ENCODE measurements at regions of chrX and their contacts with region 1.

Region 1: DNA sequence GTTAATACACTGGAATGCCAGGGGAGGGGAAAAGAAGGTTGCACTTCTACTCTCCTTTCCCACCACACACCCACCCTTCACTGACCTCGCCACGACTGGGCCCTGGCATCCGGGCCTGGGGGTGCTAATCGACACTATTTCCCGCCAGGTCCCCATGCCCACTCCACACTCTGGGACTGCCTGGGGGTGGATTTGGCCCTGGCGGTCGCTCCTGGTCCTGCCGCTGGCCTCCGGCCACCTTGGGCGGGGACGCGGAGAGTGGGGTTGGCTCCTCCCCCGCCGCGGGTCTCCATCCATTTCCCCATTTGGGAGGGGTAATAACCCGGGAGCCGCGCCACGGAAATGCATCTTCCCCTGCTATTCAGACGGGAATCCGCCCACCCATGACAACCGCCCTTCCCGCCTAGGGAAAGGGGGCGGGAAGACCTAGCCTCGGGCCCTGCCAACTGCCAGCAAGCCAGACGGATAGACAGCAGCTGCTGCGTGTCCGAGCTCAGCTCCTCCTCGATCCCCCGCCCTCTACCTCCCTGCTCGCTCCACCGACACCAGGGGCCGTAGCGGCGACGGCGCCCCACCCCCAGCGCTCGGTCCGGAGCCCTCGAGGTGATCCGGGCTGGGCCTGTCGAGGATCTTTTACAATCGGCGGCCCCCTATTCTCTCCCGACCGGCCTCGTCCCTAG is 78.1 kb downstream of the RLIM start:
- DNase-seq: peak; percentile 72
- H3K4me3 ChIP-seq: peak overlapping the region; percentile 32 to 46 (median 35)
- H3K27ac ChIP-seq: peak overlapping the region; percentile 68
- H3K4me1 ChIP-seq: peaks cover 9% of the 10 kb centered on the region
- H3K27me3 ChIP-seq: no peaks in the 10 kb centered on the region
- CTCF ChIP-seq: peak; percentile 23 to 50
- POLR2A ChIP-seq: no peak

Region 2: DNA sequence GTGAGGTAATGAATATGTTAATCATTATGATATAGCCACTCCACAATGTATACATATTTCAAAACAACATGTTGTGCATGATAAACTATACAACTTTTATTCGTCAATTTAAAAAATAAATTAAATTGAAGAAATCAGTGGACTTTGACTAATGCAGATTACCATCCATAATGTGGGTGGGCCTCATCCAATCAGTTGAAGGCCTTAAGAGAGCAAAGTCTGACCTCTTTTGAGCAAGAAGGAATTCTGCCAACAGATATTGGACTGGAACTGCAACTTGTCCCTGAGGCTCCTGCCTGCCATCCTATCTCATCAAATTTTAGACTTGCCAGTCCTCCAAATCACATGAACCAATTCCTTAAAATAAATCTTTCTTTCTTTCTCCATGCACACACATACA is 172.4 kb before region 1 on chrX:
- CTCF ChIA-PET with region 1: no interaction called
- POLR2A ChIA-PET with region 1: no interaction called
- dilution Hi-C with region 1: no loop called
- intact Hi-C with region 1: no loop called
- DNase-seq: no peak
- H3K4me3 ChIP-seq: no peak overlapping the region
- H3K27ac ChIP-seq: no peak overlapping the region
- H3K4me1 ChIP-seq: no peaks in the 10 kb centered on the region
- H3K27me3 ChIP-seq: no peaks in the 10 kb centered on the region
- CTCF ChIP-seq: no peak
- POLR2A ChIP-seq: no peak

Region 3: GRCh38 chrX:74421036-74421739 is 115.1 kb before region 1 on chrX and contains the start of gene SLC16A2:
- CTCF ChIA-PET with region 1: interaction called, 3 read pairs
- POLR2A ChIA-PET with region 1: no interaction called
- dilution Hi-C with region 1: no loop called
- intact Hi-C with region 1: loop called (anchors 1 kb)
- DNase-seq: peak; percentile 48
- H3K4me3 ChIP-seq: peak within 1 kb of the TSS; percentile 29 to 44 (median 43)
- H3K27ac ChIP-seq: no peak within 1 kb of the TSS
- H3K4me1 ChIP-seq: no peaks in the 10 kb centered on the region
- H3K27me3 ChIP-seq: no peaks in the 10 kb centered on the region
- CTCF ChIP-seq: no peak
- POLR2A ChIP-seq: no peak
- total RNA-seq, gene SLC16A2: 3.1 and 3.3 TPM in 2 replicates

Region 4: GRCh38 chrX:74574382-74574781 is 38.1 kb after region 1 on chrX:
- CTCF ChIA-PET with region 1: no interaction called
- POLR2A ChIA-PET with region 1: no interaction called
- dilution Hi-C with region 1: no loop called
- intact Hi-C with region 1: no loop called
- DNase-seq: no peak
- H3K4me3 ChIP-seq: no peak overlapping the region
- H3K27ac ChIP-seq: no peak overlapping the region
- H3K4me1 ChIP-seq: no peaks in the 10 kb centered on the region
- H3K27me3 ChIP-seq: no peaks in the 10 kb centered on the region
- CTCF ChIP-seq: no peak
- POLR2A ChIP-seq: no peak

Measured in endothelial cell of umbilical vein (primary cell).